MCF 10A (cell line): ENCODE measurements at regions of chr3 and their contacts with region 1.

Region 1: DNA sequence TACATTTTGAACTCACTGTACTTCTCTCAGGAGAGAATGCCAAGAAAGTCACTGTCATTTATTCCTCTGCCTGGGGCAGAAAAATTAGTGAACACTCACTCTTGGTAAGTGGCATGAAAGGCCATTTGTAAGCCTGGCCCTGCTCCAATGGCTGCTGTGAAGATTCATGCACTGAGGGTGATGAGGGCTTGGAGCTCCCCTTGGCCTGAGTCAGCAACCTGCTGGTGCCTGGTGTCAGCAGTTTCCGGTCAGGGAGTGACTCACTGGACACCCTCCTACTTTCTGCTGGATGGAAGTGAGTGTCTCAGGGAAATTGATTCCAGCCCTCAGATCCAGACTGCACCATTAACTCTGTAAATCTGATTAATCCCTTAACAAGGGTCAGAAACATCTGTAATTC is 37.6 kb downstream of the TRA2B start:
- DNase-seq: peak; percentile 98
- H3K4me3 Mint-ChIP-seq: no peak overlapping the region
- H3K27ac Mint-ChIP-seq: peak overlapping the region; percentile 59
- H3K4me1 Mint-ChIP-seq: peaks cover 10% of the 10 kb centered on the region
- H3K27me3 Mint-ChIP-seq: no peaks in the 10 kb centered on the region
- CTCF ChIP-seq: no peak

Region 2: GRCh38 chr3:185693985-185694653 is 206.1 kb before region 1 on chr3:
- CTCF ChIA-PET with region 1: no interaction called
- POLR2A ChIA-PET with region 1: no interaction called
- intact Hi-C with region 1: no loop called
- DNase-seq: no peak
- H3K4me3 Mint-ChIP-seq: no peak overlapping the region
- H3K27ac Mint-ChIP-seq: peak overlapping the region; percentile 35
- H3K4me1 Mint-ChIP-seq: peaks cover 8% of the 10 kb centered on the region
- H3K27me3 Mint-ChIP-seq: no peaks in the 10 kb centered on the region
- CTCF ChIP-seq: no peak

Region 3: GRCh38 chr3:185807445-185808068 is 92.7 kb before region 1 on chr3:
- CTCF ChIA-PET with region 1: no interaction called
- POLR2A ChIA-PET with region 1: no interaction called
- intact Hi-C with region 1: no loop called
- DNase-seq: peak; percentile 81
- H3K4me3 Mint-ChIP-seq: no peak overlapping the region
- H3K27ac Mint-ChIP-seq: peak overlapping the region; percentile 35
- H3K4me1 Mint-ChIP-seq: peaks cover 5% of the 10 kb centered on the region
- H3K27me3 Mint-ChIP-seq: no peaks in the 10 kb centered on the region
- CTCF ChIP-seq: no peak

Region 4: DNA sequence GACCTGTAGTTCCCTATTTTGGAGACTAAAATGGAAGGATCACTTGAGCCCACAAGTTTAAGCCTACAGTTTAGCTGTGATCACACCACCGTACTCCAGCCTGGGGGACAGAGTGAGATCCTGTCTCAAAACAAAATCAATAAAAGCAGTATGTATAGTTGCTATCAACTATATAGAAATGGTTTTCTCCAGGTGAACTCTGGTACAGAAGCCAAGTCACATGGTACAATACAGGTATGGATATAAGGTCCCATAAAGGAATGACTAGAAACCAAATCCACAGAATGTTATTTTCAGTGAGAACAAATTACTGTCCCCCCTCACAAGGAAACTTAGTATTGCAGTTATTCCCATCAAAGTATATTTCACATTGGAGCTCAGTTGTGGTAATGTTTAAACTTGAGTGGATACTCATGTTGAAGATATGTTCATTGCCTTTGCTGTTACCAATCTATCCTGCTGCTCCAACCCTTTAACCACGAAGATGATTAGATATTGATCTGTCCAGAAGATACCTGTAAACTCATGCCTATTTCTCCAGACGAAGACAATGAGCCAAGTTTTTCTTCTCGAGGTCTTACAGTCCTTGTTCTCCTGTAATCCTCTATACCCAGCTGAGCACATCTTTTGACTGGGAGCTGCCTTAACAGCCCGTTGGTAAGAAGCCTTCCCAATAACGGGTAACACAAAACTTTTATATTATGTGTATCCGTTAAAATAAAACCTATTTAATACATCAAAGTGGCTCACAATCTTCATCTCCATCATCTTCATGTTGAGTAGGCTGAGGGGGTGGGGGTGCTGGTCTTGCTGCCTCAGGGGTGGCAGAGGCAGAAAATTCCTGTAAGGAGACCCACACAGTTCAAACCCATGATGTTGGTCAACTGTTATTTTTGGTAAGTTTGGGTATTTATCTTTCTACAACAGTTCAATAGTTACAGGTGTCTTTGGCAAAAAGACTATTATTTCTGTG is 13.0 kb after region 1 on chr3:
- CTCF ChIA-PET with region 1: interaction called, 4 read pairs
- POLR2A ChIA-PET with region 1: interaction called, 30 read pairs
- intact Hi-C with region 1: no loop called
- DNase-seq: no peak
- H3K4me3 Mint-ChIP-seq: no peak overlapping the region
- H3K27ac Mint-ChIP-seq: no peak overlapping the region
- H3K4me1 Mint-ChIP-seq: no peaks in the 10 kb centered on the region
- H3K27me3 Mint-ChIP-seq: no peaks in the 10 kb centered on the region
- CTCF ChIP-seq: no peak